Uterus (tissue), 4 donors: ENCODE measurements at regions of chr9 and their contacts with region 1.

Region 1: GRCh38 chr9:112074250-112075008 is 100.7 kb downstream of the SUSD1 start:
- DNase-seq: peak; percentile 64 to 83
- H3K4me3 ChIP-seq: peak overlapping the region in 1 of 2 donors; percentile 2
- H3K27ac ChIP-seq: peak overlapping the region; percentile 78 to 96
- H3K4me1 ChIP-seq: peaks cover 0 to 3% of the 10 kb centered on the region in 2 donors
- H3K27me3 ChIP-seq: no peaks in the 10 kb centered on the region
- CTCF ChIP-seq: peak; percentile 92 to 96 (median 94)
- POLR2A ChIP-seq: no peak

Region 2: DNA sequence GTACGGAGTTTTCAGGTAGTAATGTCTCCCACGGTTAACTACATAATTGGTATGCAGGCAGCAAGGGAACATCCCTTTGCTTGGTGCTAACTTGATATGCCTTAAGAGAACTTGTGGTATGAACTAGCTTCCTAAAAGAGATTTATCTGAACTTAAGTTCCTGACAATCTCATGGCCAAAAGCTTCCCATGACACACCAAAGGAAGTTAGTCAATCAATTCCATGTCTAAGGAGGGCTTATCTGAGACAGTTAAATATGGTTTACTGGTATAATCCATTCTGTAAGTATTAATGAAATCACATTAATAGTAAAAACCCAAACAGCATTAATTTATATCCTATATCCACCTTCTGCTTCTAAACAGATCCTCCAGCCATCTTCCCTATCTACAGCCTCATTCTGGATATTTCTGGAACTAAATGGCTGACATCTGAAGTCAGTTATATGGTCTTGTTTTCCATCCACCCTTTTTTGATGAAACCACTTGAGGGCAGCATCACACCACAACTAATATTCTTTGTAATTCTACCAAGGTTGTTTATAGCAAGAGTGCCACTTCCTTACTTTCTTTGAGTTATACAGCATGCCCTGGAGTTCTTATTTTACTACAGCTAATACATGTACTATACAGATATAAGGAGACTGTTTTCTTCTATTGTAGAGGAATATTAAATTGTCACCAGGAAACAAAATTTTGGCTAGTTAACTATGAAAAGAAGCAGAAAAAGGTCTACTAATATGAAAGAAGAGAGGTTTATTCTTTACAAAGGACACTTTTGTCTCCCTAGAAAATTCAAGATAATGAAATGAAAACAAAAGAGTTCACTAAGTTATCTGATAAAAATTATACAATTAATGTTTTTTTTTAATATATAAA is 314.4 kb before region 1 on chr9:
- intact Hi-C with region 1: loop called (anchors 2 kb)
- DNase-seq: peak; percentile 21 to 65
- H3K4me3 ChIP-seq: no peak overlapping the region
- H3K27ac ChIP-seq: peak overlapping the region in 1 of 2 donors; percentile 64
- H3K4me1 ChIP-seq: no peaks in the 10 kb centered on the region
- H3K27me3 ChIP-seq: no peaks in the 10 kb centered on the region
- CTCF ChIP-seq: peak; percentile 63 to 85 (median 76)
- POLR2A ChIP-seq: no peak

Region 3: DNA sequence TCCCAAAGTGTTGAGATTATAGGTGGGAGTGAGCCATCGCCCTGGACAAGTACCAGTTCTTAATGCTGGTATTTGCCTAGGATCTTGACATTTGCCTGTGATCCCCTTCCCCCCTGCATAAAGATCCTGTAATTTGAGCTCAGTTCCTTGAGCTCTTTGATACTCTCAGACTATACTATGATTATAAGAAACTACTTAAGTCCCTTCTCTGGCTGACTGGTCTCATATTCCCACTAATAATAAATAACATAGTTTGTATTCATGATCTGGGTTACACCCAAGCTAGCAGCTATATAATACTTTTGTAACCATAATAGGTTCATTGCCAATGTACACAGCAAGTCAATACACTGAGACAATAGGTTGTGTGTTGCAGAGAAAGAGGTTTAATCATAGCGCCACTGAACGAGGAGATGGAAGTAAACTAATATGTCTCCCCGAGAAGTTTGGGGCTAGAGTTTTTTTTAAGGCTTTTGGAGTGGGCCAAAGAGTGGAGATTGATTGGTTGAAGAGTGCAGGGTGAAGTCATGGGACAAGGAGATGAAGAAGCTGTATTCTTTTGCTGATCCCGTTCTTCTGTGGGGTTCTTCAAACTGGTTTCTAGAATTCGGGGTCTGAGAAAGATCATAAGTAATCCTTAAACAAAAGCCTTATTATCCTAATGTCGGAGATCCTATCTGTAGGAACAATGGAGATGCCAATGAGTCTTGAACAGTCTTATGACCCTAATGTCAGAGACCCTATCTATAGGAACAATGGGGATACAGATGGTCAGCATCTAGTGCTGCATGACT is 259.0 kb before region 1 on chr9:
- intact Hi-C with region 1: no loop called
- DNase-seq: no peak
- H3K4me3 ChIP-seq: no peak overlapping the region
- H3K27ac ChIP-seq: no peak overlapping the region
- H3K4me1 ChIP-seq: no peaks in the 10 kb centered on the region
- H3K27me3 ChIP-seq: no peaks in the 10 kb centered on the region
- CTCF ChIP-seq: no peak
- POLR2A ChIP-seq: no peak

Region 4: DNA sequence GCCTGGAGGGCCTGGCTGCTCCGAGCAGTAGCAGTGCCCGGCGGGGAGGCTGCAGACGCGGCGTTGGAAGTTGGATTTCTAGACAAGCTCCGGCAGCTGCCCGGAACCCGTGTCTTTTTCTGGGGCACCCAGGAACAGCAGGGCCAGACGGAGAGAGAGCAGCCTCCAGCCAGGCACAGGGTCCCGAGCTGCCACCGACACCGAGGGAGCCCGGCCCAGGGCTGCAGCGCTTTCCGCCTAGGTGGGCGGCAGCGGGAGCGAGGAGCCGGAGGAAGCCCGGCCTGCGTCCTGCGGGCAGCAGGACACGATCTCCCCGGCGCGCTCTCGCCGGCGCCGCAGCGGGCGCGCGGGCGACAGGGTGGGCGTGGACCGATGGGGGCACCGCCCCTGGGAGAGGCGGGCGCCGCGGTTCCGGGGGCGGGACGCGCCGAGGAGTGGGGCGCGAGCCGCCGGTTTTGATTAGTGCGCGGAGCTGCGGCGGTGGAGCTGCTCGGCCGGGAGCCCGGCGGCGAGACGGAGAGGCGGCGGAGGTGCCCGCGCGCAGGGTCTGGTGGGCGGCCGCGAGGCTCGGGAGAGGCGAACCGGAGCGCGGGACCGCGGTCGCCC is 178.0 kb before region 1 on chr9 and contains the start of gene UGCG:
- intact Hi-C with region 1: loop called (anchors 5 kb)
- DNase-seq: peak; percentile 82 to 91
- H3K4me3 ChIP-seq: peak within 1 kb of the TSS; percentile 71 to 81
- H3K27ac ChIP-seq: peak within 1 kb of the TSS; percentile 93 to 96
- H3K4me1 ChIP-seq: no peaks in the 10 kb centered on the region
- H3K27me3 ChIP-seq: no peaks in the 10 kb centered on the region
- CTCF ChIP-seq: peak in 1 of 4 experiments; percentile 14
- POLR2A ChIP-seq: peak; percentile 97 to 99
- total RNA-seq, gene UGCG: 12.3 to 75.1 (median 34.5) TPM